Psoas muscle (tissue), 8 donors: ENCODE measurements at regions of chr5 and their contacts with region 1.

Region 1: DNA sequence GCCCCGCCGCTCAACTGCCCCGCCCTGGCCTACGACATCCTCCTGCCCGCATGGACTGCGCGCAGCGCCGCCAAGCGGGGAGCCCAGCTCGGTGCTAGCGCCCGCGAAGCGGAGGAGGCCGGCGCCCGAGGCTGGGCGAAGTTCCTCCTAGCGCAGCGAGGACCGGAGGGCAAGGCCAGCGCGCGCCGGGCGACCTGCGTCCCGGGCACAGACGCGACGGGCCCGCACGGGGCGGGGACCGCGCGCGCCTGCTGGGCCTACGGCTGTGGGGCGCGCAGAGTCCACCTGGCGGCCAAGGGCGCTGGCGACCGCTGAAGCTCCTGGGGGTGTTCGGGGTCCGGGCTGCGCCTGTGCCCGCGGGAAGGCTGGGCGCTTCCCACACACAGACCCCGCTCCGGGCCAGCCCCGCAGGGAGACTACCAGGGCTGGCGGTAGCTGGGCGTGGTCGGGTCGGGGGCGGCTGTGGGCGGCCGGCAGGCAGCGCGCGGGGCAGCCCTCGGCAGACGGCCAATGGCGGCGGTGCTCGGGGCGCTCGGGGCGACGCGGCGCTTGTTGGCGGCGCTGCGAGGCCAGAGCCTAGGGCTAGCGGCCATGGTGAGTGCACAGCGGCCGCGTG is at the start of gene PCBD2:
- DNase-seq: peak; percentile 92 to 96
- ATAC-seq: peak; percentile 89 to 92 (median 89)
- H3K4me3 ChIP-seq: peak within 1 kb of the TSS; percentile 71
- H3K27ac ChIP-seq: peak within 1 kb of the TSS; percentile 99
- H3K4me1 ChIP-seq: no peaks in the 10 kb centered on the region
- H3K27me3 ChIP-seq: no peaks in the 10 kb centered on the region
- CTCF ChIP-seq: peak; percentile 83
- total RNA-seq, gene PCBD2: 23.8 to 29.9 (median 26.0) TPM

Region 2: DNA sequence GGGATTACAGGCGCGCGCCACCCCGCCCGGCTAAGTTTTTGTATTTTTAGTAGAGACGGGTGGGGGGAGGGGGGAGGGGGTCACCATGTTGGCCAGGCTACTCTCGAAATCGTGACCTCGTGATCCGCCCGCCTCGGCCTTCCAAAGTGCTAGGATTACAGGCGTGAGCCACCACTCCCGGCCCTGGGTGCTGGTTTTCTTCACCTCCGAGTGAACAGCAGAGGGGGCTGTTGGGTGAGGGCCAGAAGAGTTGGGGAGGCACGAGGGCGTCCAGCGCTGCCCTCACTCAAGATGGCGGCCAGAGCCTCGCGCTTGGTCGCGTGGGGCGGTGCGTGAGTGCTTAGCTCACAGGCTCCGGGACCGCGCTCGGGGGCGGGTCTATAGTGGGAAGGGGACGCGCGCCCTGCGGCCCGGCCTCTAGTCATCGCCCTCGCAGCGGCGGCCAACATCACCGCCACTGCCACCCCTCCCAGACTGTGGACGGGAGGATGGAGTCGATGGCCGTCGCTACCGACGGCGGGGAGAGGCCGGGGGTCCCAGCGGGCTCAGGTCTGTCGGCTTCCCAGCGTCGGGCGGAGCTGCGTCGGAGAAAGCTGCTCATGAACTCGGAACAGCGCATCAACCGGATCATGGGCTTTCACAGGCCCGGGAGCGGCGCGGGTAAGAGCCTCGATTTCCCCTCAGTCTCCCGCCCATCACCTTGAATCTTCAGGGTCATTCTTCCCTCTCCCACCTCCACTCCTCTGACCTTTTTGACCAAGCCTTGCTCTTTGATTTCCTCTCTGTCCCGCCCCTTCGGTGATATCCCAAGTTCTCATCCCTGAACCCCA is 166.4 kb before region 1 on chr5 and contains the start of gene CAMLG:
- intact Hi-C with region 1: loop called in 1 of 2 experiments (anchors 1 kb)
- DNase-seq: peak; percentile 99
- ATAC-seq: peak; percentile 98 to 99 (median 99)
- H3K4me3 ChIP-seq: peak within 1 kb of the TSS; percentile 96
- H3K27ac ChIP-seq: peak within 1 kb of the TSS; percentile 97
- H3K4me1 ChIP-seq: peaks cover 13% of the 10 kb centered on the region
- H3K27me3 ChIP-seq: no peaks in the 10 kb centered on the region
- CTCF ChIP-seq: peak; percentile 37
- total RNA-seq, gene CAMLG: 25.8 to 44.9 (median 29.6) TPM

Region 3: DNA sequence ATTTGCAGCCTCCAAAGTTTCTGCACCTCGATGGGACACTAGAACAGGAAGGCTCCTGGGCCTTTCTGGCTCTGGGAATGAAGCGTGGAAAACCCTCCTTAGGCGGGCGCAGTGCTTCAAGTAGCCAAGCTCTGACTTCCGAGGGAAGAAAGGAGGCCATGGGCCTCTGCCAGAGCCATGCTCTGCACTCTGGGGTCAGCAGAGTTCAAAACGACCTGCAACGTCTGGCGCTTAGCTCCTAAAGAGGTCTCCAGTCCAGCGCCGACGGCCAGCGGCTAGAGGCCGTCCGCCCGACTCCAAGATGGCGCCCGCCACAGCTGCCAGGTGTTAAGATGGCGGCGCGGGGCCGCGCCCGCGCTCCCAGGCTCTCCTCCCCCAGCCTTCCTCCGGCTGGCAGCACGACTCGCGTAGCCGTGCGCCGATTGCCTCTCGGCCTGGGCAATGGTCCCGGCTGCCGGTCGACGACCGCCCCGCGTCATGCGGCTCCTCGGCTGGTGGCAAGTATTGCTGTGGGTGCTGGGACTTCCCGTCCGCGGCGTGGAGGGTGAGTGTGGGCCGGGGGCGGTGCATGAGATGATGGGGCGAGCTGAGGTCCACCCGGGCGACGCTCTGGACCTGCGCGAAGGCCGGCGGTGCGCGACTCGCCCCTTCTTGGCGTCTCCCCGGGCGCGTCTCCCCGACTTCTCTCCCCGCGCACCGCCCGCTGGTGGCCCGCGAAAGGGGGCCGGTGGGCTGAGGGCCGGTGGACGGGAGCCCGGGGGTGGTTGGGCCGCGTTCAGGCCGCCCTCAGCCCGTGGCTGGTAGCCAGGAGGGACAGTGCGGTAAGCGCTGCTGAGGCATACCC is 30.5 kb before region 1 on chr5 and contains the start of gene TXNDC15:
- intact Hi-C with region 1: loop called in 1 of 2 experiments (anchors 2 kb)
- DNase-seq: peak; percentile 89 to 95
- ATAC-seq: peak; percentile 94 to 96 (median 96)
- H3K4me3 ChIP-seq: peak within 1 kb of the TSS; percentile 93
- H3K27ac ChIP-seq: peak within 1 kb of the TSS; percentile 97
- H3K4me1 ChIP-seq: peaks cover 9% of the 10 kb centered on the region
- H3K27me3 ChIP-seq: no peaks in the 10 kb centered on the region
- CTCF ChIP-seq: no peak
- total RNA-seq, gene TXNDC15: 21.1 to 32.0 (median 26.6) TPM

Region 4: DNA sequence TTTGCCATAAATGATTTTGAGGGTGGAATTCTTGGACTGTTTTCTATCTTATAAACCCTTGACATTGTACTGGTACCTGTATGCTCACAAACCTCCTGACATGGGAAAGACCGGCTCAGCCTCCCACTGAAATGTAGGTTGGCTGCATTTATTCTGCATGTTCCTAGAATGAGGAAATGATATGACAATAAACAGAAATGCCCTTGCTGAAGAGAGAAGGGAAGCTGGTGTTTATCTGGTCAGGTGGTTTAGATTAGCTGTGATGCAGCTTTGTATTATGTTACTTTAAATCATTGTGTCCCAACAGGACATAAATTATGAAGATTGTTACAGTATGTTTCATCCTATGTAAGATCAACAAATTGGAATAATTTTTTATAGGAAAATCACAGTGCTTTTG is 39.9 kb after region 1 on chr5:
- intact Hi-C with region 1: no loop called
- DNase-seq: no peak
- ATAC-seq: no peak
- H3K4me3 ChIP-seq: no peak overlapping the region
- H3K27ac ChIP-seq: peak overlapping the region; percentile 10
- H3K4me1 ChIP-seq: peaks cover 20% of the 10 kb centered on the region
- H3K27me3 ChIP-seq: no peaks in the 10 kb centered on the region
- CTCF ChIP-seq: no peak

Region 5: DNA sequence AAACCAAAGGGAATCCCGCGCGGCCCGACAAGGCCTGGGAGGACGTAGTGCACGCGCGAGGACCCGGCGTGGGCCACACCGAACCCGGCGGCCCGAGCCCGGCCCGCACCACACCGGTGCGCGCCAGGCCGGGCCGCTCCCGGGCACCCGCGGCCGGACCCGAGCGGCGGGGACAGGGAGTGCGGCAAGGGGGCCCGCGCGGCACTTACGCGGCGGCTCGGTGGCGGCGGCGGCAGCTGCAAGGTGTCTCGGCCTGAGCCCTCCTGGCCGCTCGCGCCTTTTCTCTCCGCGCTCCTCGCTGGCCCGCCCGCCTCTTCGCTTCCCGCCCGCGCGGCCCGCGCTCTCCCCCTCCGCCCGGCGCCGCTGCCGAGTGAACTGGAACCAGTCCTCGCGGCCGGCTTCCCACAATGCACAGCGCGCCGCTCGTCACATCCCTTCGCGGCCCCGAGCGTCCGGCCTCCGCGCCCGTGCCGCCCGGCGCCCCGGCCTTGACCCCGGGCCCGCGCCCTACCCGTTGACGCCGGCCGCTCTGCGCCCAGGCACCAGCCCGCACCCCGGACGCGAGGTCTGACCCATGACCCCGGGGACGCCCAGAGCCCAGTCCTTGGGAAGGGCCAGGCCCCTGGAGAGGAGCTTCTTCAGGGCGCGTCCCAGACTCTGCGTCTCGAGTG is 494.2 kb after region 1 on chr5 and contains the start of gene MACROH2A1:
- intact Hi-C with region 1: no loop called
- DNase-seq: peak; percentile 94 to 95
- ATAC-seq: peak; percentile 90 to 93 (median 92)
- H3K4me3 ChIP-seq: peak within 1 kb of the TSS; percentile 86
- H3K27ac ChIP-seq: peak within 1 kb of the TSS; percentile 95
- H3K4me1 ChIP-seq: peaks cover 39% of the 10 kb centered on the region
- H3K27me3 ChIP-seq: no peaks in the 10 kb centered on the region
- CTCF ChIP-seq: no peak
- total RNA-seq, gene MACROH2A1: 57.8 to 108 (median 81.5) TPM